Stomach (tissue), 19 donors: ENCODE measurements at regions of chr13 and their contacts with region 1.

Region 1: GRCh38 chr13:111066544-111066943 is 48.6 kb upstream of the ARHGEF7 start:
- DNase-seq: peak in 1 of 2 donors; percentile 41
- H3K4me3 ChIP-seq: peak overlapping the region in 2 of 4 donors; percentile 51 to 69
- H3K27ac ChIP-seq: peak overlapping the region in 3 of 5 donors; percentile 18 to 66 (median 50)
- H3K4me1 ChIP-seq: peaks cover 0 to 14% (median 8%) of the 10 kb centered on the region in 4 donors
- H3K27me3 ChIP-seq: peaks cover 0 to 31% (median 4%) of the 10 kb centered on the region in 3 donors
- CTCF ChIP-seq: no peak
- EP300 ChIP-seq: no peak
- POLR2A ChIP-seq: no peak

Region 2: DNA sequence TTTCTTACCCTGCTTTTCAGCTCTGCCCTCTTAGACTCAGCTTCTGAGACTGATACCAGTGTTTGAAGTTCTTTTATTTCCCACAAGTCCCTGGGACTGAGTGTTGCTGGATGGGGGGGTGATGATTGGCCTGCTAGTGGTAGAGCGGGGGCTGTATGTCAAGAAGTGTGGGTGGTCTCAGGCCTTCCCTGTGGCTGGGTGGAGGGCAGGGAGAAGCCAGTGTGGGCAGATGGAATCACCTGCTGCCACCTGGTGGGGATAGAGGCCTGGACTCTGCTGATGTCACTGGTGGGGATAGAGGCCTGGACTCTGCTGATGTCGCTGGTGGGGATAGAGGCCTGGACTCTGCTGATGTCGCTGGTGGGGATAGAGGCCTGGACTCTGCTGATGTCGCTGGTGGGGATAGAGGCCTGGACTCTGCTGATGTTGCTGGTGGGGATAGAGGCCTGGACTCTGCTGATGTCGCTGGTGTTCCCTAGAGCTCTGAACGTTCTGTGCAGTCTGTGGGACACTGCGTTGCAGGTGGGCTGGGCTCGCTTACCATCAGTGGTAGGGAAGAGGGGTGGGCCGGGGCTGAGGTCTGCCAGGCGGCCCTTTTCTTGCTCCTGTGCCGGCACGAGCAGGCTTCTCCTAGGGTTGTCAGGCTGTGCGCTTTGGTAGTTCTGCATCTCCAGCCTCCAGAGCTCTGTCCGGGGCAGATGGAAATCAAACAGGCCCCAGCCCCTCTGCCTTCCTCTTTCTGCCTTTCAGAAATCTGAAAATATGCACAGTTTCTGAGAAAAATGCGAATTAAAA is 149.8 kb after region 1 on chr13:
- intact Hi-C with region 1: loop called (anchors 10 kb)
- DNase-seq: peak; percentile 39 to 79
- H3K4me3 ChIP-seq: no peak overlapping the region
- H3K27ac ChIP-seq: peak overlapping the region in 1 of 5 donors; percentile 78
- H3K4me1 ChIP-seq: peaks cover 8 to 82% (median 33%) of the 10 kb centered on the region in 4 donors
- H3K27me3 ChIP-seq: no peaks in the 10 kb centered on the region
- CTCF ChIP-seq: peak in 3 of 7 experiments; percentile 12 to 54 (median 22)
- EP300 ChIP-seq: no peak
- POLR2A ChIP-seq: no peak